ENCODE measurements at regions of chr12 and their contacts with region 1.

Region 1: DNA sequence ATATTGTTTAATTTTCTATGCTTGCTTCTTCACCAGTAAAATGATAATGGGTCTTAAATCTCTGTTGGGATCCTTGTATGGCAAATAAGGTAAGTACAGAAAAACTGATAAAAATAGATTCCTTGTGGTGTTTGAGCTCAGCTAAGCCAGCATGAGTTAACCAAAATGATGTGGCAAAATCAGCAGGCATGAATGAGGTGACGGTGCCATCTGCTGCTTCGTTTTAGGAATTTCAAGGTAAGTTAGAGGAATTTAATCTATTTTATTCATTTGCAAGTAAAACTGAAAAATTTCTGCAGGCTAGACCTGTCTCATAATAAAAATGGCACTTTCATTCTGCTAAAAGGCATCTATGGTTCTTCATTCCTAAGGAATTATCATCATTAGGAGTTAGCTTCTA is 10.0 kb upstream of the CLEC7A start:
- DNase-seq: peak; percentile 39 to 79
- ATAC-seq: peak; percentile 64 to 76; a peak in 5 of 6 replicates
- H3K4me3 ChIP-seq: no peak overlapping the region
- H3K27ac ChIP-seq: no peak overlapping the region
- H3K4me1 ChIP-seq: no peaks in the 10 kb centered on the region
- CTCF ChIP-seq: peak; percentile 87
- EP300 ChIP-seq: no peak
- POLR2A ChIP-seq: no peak
- RAD21 ChIP-seq: peak; percentile 91 to 92

Region 2: DNA sequence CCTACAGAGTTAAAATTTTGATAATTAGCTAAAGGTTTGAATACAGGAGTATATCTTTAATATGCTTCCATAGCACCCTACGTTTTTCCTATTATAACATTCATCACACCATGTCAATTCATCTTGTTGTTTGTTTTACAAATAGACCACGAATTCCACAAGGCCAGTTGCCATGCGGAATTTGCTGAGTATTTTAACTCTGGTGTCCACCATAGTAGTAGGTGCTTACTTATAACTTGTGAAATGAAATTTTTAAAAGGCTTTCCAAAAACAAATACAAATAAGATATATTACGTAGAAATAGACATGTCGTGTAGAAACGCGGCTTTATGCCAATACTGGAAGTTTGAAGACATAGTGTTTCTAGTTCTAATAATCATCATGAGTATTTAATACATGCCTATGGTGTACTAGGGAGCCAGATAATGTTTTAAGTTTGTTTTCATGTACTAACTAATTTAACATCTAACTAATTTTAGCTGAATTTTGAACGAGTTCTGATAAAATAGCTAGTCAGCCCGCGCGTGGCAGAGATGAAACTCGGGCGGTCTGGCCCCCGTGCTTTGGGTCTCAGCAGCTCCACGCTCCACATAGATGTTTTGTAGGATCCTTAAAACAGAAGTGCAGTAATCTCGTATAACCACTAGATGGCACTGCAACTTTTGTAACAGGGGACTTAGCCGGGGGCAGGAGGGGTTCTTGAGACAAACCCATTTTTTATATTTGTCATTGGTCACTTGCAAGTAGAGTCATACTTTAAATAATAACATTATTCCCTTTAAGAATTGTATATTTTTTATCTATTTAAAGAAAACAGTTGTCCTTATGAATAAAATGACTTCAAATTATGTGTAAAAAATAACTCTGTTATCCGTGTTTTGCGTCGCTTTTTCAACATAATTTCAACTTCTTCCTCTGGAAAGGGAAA is 389.5 kb before region 1 on chr12:
- CTCF ChIA-PET with region 1: interaction called, 18 read pairs
- POLR2A ChIA-PET with region 1: no interaction called
- DNase-seq: peak; percentile 74 to 77
- ATAC-seq: peak; percentile 88 to 97
- H3K4me3 ChIP-seq: 0 out of 3 replicates have a peak overlapping the region, but pooled peaks have one; percentile 16
- H3K27ac ChIP-seq: no peak overlapping the region
- H3K4me1 ChIP-seq: 0 out of 3 replicates have a peak, but pooled peaks cover 3% of the 10 kb centered on the region
- CTCF ChIP-seq: peak; percentile 75
- EP300 ChIP-seq: no peak
- POLR2A ChIP-seq: no peak
- RAD21 ChIP-seq: peak; percentile 68 to 79

Region 3: DNA sequence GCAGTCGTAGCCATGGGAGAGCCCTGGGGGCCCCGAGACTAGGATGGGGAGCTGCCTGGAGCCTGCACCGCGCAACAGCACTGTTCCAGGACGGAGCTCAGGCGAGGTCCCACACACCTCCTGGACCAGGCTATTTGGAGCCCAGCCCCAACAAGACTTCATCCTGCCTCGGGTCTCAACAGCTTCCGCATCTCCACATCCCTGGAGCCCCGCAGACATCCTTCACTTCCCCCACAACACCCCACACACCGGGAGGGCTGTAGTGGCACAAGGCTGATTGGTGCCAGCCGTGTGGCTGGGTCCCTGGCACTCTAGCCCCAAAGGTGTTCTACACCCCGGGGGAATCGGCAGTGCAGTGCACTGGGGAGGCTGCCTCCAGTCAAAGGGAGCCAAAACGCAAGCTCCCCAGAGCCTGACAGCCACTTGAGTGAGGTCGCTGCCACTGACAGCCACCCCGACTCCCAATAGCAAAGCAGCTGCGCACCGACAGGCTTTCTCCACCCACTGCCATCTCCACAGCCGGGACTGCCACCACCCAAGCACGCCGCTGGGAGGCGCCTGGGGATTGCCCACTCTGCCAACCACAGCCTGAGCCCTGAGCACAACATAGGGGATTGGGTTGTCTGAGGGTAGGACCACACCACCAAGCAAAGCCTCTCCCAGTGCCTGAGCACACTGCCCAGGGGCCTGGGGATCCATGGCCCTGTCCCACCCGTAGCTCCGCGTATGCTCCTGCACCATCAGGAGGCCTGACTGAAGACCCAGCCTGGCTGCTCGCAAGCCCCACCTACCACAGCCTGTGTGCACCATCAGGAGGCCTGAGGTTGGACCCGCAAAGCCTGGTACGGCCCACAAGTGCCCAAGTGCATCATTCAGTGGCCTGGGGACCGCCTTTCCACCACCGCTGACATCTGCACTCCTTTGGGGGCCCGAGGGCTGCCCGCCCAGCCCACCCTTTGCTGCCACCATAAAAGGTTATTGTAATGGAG is 325.9 kb before region 1 on chr12:
- CTCF ChIA-PET with region 1: interaction called, 15 read pairs
- POLR2A ChIA-PET with region 1: no interaction called
- DNase-seq: peak; percentile 66 to 79
- ATAC-seq: peak; percentile 97 to 100
- H3K4me3 ChIP-seq: peak overlapping the region; percentile 23; the same call in 2 of the 3 replicates
- H3K27ac ChIP-seq: no peak overlapping the region
- H3K4me1 ChIP-seq: 0 out of 3 replicates have a peak, but pooled peaks cover 3% of the 10 kb centered on the region
- CTCF ChIP-seq: peak; percentile 65
- EP300 ChIP-seq: no peak
- POLR2A ChIP-seq: no peak
- RAD21 ChIP-seq: peak; percentile 73 to 85

Region 4: GRCh38 chr12:10001171-10001776 is 138.7 kb before region 1 on chr12:
- CTCF ChIA-PET with region 1: interaction called, 11 read pairs
- POLR2A ChIA-PET with region 1: no interaction called
- DNase-seq: no peak
- ATAC-seq: no peak
- H3K4me3 ChIP-seq: no peak overlapping the region
- H3K27ac ChIP-seq: no peak overlapping the region
- H3K4me1 ChIP-seq: no peaks in the 10 kb centered on the region
- CTCF ChIP-seq: no peak
- EP300 ChIP-seq: no peak
- POLR2A ChIP-seq: no peak
- RAD21 ChIP-seq: no peak

Region 5: GRCh38 chr12:10016881-10017280 is 123.1 kb before region 1 on chr12:
- CTCF ChIA-PET with region 1: interaction called, 52 read pairs
- POLR2A ChIA-PET with region 1: no interaction called
- DNase-seq: peak; percentile 7 to 54
- ATAC-seq: no peak; a peak in 1 of 6 replicates
- H3K4me3 ChIP-seq: no peak overlapping the region
- H3K27ac ChIP-seq: peak overlapping the region; percentile 27 to 58; a peak in 3 of 6 replicates
- H3K4me1 ChIP-seq: peaks cover 7% of the 10 kb centered on the region; the same call in 2 of the 3 replicates
- CTCF ChIP-seq: no peak
- EP300 ChIP-seq: no peak
- POLR2A ChIP-seq: no peak
- RAD21 ChIP-seq: no peak

Region 6: DNA sequence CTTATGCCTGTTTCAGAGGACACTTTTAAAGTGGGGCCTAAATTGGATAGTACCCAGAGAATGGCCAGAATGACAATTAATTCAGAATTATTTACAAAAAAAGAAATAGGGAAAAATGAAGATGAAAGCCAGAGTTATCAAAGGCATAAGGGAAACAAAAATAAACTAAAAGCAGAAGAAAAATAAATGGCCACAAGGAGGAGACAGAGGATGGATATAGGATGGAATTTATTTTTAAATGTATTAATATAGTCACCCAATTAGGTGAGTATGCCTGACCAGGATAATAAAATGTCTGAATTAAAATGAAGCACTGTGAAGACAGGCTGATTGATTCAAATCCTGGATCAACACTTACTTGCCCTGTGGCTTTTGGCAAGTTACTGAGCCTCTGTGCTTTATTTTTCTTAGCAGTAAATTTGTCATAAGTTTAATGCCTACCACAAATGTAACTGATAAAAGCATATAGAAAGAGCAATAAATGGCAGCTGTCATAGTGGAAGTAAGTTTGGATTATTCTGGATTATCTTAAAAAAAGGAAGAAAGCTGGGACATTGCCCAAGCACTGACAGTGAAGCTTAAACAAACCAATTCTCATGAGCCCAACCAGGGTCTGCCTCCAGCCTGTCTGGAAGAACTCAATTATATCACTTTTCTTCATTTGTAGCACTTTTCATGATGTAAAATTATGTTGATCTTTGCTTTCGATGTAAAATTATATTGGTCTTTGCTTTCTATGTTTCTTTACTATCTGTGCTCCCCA is 106.0 kb before region 1 on chr12:
- CTCF ChIA-PET with region 1: interaction called, 31 read pairs
- POLR2A ChIA-PET with region 1: no interaction called
- DNase-seq: no peak
- ATAC-seq: 0 out of 6 replicates have a peak, but pooled peaks of 1 of the 2 experiments have one; percentile 31
- H3K4me3 ChIP-seq: no peak overlapping the region
- H3K27ac ChIP-seq: no peak overlapping the region
- H3K4me1 ChIP-seq: peaks cover 13% of the 10 kb centered on the region; the same call in 2 of the 3 replicates
- CTCF ChIP-seq: peak; percentile 62
- EP300 ChIP-seq: no peak
- POLR2A ChIP-seq: no peak
- RAD21 ChIP-seq: peak; percentile 78 to 80

Region 7: DNA sequence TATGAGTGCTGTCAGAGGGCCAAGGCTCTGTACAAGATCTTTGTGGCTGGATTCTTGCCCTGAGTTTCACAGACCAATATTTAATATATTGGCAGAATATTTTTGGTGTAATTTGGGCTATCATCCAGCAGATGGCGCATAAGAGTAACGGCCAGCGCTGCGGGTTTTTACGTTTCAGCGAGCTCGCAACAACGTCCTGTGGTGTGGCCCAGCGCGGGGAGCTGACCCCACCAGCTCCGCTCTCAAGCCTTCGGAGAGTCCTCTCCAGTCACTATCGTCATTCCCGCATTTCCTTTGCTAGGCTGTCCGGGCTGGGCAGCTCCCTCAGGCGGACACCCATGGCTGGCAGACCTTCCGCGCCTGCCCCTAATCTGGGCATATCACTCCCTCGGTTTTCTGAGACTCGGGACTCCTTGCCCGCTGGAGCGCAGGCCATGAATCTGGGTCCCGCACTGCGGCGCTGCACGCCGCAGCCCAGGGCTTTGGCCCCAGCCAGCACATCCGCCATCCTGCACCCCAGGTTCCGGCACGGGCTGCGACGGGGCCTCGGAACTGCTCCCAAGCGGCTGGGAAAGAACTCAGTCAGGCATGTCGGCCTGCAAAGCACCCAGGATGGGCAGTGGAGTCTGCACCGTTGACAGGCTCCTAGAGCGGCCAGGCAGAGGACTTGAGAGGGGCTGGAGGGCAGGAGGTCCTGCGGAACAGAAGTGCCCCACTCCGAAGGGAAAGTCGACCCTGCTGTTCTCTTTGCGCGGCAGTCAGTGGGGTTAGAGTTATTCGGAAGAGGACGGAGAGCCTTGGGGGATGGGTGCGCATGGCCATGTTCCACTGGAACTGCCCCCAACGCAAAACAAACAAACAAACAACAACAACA is 13.5 kb after region 1 on chr12:
- CTCF ChIA-PET with region 1: interaction called, 17 read pairs
- POLR2A ChIA-PET with region 1: no interaction called
- DNase-seq: peak; percentile 55 to 78
- ATAC-seq: peak; percentile 97
- H3K4me3 ChIP-seq: peak overlapping the region; percentile 44
- H3K27ac ChIP-seq: peak overlapping the region; percentile 63 to 93
- H3K4me1 ChIP-seq: 0 out of 3 replicates have a peak, but pooled peaks cover 4% of the 10 kb centered on the region
- CTCF ChIP-seq: peak; percentile 89
- EP300 ChIP-seq: no peak
- POLR2A ChIP-seq: peak; percentile 49
- RAD21 ChIP-seq: peak; percentile 71 to 79

Region 8: GRCh38 chr12:10341892-10342509 is 202.0 kb after region 1 on chr12:
- CTCF ChIA-PET with region 1: no interaction called
- POLR2A ChIA-PET with region 1: no interaction called
- DNase-seq: no peak
- ATAC-seq: no peak
- H3K4me3 ChIP-seq: no peak overlapping the region
- H3K27ac ChIP-seq: no peak overlapping the region
- H3K4me1 ChIP-seq: peaks cover 13% of the 10 kb centered on the region
- CTCF ChIP-seq: no peak
- EP300 ChIP-seq: no peak
- POLR2A ChIP-seq: no peak
- RAD21 ChIP-seq: no peak